Motor neuron (in vitro differentiated cells): ENCODE measurements at regions of chr7 and their contacts with region 1.

Region 1: DNA sequence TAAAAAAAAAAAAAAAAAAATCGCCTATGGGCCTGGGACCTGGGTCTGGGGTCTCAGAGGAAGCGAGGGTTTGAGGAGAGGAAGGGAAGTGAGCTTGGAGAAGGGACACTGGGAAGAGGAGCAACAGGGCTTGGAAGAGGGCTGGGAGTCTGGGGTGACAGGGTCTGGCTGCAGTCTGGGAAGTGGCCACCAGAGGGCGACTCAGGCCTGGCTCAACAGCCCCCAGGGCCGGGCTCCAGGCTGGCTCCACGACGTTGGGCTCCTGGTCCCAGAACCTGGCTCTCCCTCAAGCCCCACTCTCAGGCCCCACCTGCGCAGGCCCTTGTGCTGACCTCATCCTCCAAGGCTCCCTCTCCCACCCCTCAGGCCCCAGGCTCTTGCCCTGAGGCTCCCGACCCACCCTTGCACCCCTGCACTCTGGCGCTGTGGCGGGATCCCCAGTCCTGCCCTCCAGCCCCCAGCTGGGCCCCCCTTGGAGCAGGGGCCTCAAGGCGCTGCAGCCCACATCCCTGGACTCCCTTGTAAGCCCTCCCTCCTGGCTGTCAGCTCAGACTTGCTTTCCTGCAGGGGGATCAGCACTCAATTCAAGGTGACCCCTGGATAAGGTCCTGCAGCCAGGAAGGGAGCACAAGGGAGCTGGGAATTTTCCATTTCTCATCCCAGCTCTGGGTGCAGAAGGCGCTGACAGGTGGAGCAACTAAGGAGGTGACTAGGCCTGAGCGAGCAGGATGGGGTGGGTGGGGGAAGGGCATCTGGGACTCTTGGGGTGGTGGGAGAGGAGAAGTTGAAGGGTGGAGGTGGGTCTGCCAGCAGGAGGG is 5.4 kb upstream of the SPACDR start:
- ATAC-seq: peak; percentile 69 to 89 (median 85)
- H3K4me3 ChIP-seq: no peak overlapping the region
- H3K27ac ChIP-seq: peak overlapping the region in 1 of 2 donors; percentile 48
- H3K4me1 ChIP-seq: peaks cover 3 to 15% of the 10 kb centered on the region in 2 donors

Region 2: DNA sequence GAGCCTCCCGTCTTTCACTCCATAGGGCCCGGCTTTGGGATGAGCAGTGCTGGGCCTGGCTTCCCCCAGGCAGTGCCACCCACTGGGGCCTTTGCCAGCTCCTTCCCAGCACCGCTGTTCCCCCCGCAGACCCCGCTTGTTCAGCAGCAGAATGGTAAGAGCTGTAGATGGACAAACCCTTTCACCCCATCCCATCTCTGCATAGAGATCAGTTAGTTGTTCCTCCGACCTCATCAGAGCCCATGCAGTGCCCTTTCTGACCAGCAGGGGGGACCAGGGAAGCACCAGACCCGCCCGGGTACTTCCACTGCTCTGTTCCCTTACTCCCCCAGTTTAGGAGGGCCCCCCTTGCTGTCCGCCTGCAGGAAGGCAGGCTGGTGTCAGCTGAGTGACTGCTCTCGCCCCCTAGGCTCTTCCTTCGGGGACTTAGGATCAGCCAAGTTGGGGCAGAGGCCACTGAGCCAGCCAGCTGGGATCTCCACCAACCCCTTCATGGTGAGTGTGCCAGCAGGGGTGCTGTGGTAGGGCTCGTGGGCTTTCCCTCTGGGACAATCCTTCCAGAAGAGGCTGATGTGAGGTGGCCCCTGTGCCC is 94.5 kb after region 1 on chr7:
- in situ Hi-C with region 1: loop called in 5 of 9 experiments (anchors 10 to 25 kb)
- ATAC-seq: peak in 6 of 8 experiments; percentile 20 to 72 (median 44)
- H3K4me3 ChIP-seq: no peak overlapping the region
- H3K27ac ChIP-seq: no peak overlapping the region
- H3K4me1 ChIP-seq: peaks cover 30 to 32% of the 10 kb centered on the region in 2 donors

Region 3: GRCh38 chr7:100604028-100604975 is 134.9 kb after region 1 on chr7:
- in situ Hi-C with region 1: no loop called
- ATAC-seq: peak; percentile 38 to 78 (median 71)
- H3K4me3 ChIP-seq: peak overlapping the region; percentile 26 to 41 (median 37)
- H3K27ac ChIP-seq: peak overlapping the region in 1 of 2 donors; percentile 43
- H3K4me1 ChIP-seq: peaks cover 39 to 47% of the 10 kb centered on the region in 2 donors

Region 4: DNA sequence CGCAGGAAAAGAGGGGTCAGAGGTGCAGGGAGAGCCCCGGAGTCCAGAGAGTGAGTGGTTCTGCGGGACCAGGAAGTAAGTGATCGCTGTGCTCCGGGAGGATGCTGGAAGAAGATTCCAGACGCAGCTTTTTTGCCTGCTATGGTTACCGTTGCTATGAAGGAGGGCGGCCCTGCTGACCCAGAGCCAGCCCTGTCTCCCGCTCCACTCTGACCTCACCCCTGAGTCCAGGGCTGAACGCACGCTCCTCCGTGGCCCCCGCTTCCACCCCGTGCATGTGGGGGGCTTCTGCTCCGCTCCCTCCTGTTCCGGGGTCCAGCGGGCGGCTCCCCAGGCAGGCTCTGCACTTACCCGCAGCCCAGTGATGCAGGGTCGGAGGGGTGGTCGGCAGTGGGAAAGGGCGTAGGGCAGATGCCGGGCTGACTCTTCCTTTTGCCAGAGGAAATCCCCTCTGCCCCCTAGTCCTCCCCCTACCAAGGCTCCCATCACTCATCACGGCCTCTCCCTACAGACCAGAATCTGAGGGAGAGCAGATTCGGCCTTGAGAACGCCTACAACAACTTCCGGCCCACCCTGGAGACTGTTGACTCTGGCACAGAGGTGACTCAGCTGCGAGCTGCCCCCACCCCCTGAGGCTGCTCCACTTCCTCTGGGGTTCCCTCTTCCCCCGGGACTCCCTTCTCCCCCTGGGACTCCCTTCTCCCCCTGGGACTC is 547.8 kb after region 1 on chr7:
- in situ Hi-C with region 1: no loop called
- ATAC-seq: peak; percentile 90 to 96 (median 92)
- H3K4me3 ChIP-seq: peak overlapping the region; percentile 6 to 33 (median 20)
- H3K27ac ChIP-seq: peak overlapping the region; percentile 42 to 85
- H3K4me1 ChIP-seq: peaks cover 8 to 13% of the 10 kb centered on the region in 2 donors

Region 5: GRCh38 chr7:102260856-102261255 is 1791.4 kb after region 1 on chr7:
- in situ Hi-C with region 1: no loop called
- ATAC-seq: peak; percentile 35 to 100 (median 100)
- H3K4me3 ChIP-seq: no peak overlapping the region
- H3K27ac ChIP-seq: peak overlapping the region in 1 of 2 donors; percentile 22
- H3K4me1 ChIP-seq: peaks cover 2 to 9% of the 10 kb centered on the region in 2 donors